ENCODE measurements at regions of chr11 and their contacts with region 1.

Region 1: GRCh38 chr11:128290106-128290840 is 297.1 kb downstream of the ETS1 start:
- DNase-seq: peak; percentile 95
- ATAC-seq: peak; percentile 95
- H3K4me3 ChIP-seq: no peak overlapping the region
- H3K27ac ChIP-seq: no peak overlapping the region
- H3K4me1 ChIP-seq: peaks cover 14% of the 10 kb centered on the region
- H3K27me3 ChIP-seq: peaks cover 1% of the 10 kb centered on the region; the same call in 1 of the 2 replicates
- CTCF ChIP-seq: peak; percentile 89
- POLR2A ChIP-seq: peak; percentile 46; the same call in 1 of the 2 replicates
- RAD21 ChIP-seq: peak; percentile 99

Region 2: GRCh38 chr11:128453444-128454336 is 163.4 kb after region 1 on chr11:
- CTCF ChIA-PET with region 1: no interaction called
- POLR2A ChIA-PET with region 1: no interaction called
- dilution Hi-C with region 1: no loop called
- in situ Hi-C with region 1: loop called (anchors 5 kb)
- intact Hi-C with region 1: loop called (anchors 2 kb)
- DNase-seq: peak; percentile 99
- ATAC-seq: peak; percentile 82
- H3K4me3 ChIP-seq: no peak overlapping the region
- H3K27ac ChIP-seq: peak overlapping the region; percentile 41; the same call in 1 of the 2 replicates
- H3K4me1 ChIP-seq: peaks cover 19% of the 10 kb centered on the region
- H3K27me3 ChIP-seq: no peaks in the 10 kb centered on the region
- CTCF ChIP-seq: no peak
- POLR2A ChIP-seq: no peak
- RAD21 ChIP-seq: peak; percentile 35

Region 3: DNA sequence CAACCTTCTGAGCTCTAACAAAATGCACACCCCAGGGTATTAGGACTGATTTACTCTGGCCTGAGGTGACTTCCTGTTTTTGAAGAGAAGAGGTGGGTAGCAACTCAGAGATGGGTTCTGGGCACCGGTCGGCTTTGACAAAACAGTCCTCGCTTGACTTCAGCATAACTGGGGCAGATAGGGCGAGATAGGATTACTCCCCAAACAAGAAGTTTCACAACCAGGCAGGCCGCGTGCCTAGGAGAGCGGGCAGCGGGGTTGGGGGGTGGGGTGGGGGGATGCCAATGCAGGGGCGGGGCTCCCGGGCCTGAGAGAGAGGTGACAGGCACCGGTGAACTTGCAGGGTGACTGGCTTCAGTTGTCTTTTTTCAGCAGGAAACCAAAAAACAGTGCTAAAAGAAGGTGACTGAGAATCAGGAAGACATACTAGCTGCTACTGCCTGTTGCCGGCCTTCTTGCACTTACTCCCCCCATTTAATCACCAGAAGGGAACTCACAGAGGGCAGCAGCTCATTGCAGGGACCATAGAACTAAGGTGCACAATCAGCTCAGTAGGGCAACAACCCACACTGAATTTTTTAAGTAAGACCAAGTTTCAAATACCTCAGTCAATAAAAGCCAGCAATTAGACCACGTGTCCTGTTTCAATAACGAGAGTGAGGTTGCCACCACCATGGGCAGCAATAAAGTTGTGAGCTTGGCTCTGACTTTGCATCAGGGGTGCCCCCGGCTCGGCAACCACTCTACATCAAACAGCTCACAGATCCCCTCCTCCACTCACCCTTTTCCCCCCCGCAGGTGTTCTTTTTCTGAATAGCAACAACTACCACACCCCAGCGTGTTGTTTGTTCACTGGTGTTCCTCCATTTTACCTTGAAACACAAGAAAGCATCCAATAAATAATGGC is 334.2 kb after region 1 on chr11:
- CTCF ChIA-PET with region 1: interaction called, 4 read pairs
- POLR2A ChIA-PET with region 1: no interaction called
- dilution Hi-C with region 1: no loop called
- in situ Hi-C with region 1: loop called (anchors 5 kb)
- intact Hi-C with region 1: no loop called
- DNase-seq: no peak
- ATAC-seq: no peak
- H3K4me3 ChIP-seq: no peak overlapping the region
- H3K27ac ChIP-seq: no peak overlapping the region
- H3K4me1 ChIP-seq: peaks cover 6% of the 10 kb centered on the region
- H3K27me3 ChIP-seq: no peaks in the 10 kb centered on the region
- CTCF ChIP-seq: no peak
- POLR2A ChIP-seq: no peak
- RAD21 ChIP-seq: no peak

Measured in IMR-90 (cell line).